A549 (cell line): ENCODE measurements at regions of chr5 and their contacts with region 1.

Region 1: GRCh38 chr5:158695595-158696330 is 404.0 kb downstream of the EBF1 start:
- DNase-seq: peak; percentile 75 to 91
- ATAC-seq: peak; percentile 96 to 97
- H3K4me3 ChIP-seq: no peak overlapping the region
- H3K27ac ChIP-seq: peak overlapping the region; percentile 60 to 71; a peak in 5 of 6 replicates
- H3K4me1 ChIP-seq: peaks cover 47% of the 10 kb centered on the region
- CTCF ChIP-seq: peak; percentile 98
- EP300 ChIP-seq: no peak; a peak in 1 of 5 replicates
- POLR2A ChIP-seq: no peak
- RAD21 ChIP-seq: peak; percentile 97 to 99

Region 2: DNA sequence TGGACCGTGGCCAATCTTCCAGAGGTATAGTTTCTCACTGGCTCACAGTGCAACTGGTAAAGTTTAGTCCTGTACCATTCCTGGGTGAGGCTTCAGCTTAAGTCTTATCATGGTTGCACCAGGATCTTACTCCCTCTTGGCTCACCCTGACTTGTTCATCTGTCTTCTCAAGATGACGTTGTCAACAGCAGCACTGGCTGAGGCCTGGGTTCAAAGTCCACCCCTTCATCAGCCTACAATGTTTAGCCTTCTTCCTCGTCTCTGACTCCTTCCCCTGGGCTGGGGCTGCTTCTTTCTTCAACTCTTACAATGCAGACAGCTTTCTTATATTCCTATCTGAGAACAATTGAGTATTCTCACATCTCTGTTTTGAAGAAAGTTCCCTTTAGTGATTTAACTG is 525.7 kb before region 1 on chr5:
- CTCF ChIA-PET with region 1: interaction called, 41 read pairs
- POLR2A ChIA-PET with region 1: no interaction called
- DNase-seq: peak in 1 of 2 experiments; percentile 18
- ATAC-seq: peak in 1 of 2 experiments; percentile 28; a peak in 2 of 6 replicates
- H3K4me3 ChIP-seq: no peak overlapping the region
- H3K27ac ChIP-seq: no peak overlapping the region
- H3K4me1 ChIP-seq: no peaks in the 10 kb centered on the region
- CTCF ChIP-seq: no peak
- EP300 ChIP-seq: no peak
- POLR2A ChIP-seq: no peak
- RAD21 ChIP-seq: no peak

Region 3: DNA sequence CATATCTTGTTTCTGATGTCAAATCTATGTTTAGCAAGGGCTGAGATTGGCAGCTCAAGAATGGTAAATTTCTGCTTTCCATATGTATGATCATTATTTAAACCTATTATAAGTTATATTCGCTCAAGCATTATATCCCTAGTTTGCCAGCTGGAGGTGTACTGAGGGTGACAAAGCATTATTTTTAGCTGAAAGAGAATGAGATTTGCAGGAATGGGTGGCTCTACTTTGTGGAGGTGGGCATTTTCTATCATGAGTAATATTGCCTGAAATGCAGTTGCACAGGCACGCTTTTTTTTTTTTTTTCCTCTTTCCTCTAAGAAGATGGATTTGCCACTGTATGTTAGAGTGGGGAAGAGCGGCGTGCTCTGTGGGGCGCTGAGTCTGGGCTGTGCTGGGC is 10.1 kb after region 1 on chr5:
- CTCF ChIA-PET with region 1: interaction called, 10 read pairs
- POLR2A ChIA-PET with region 1: no interaction called
- DNase-seq: no peak
- ATAC-seq: no peak
- H3K4me3 ChIP-seq: no peak overlapping the region
- H3K27ac ChIP-seq: no peak overlapping the region
- H3K4me1 ChIP-seq: peaks cover 14% of the 10 kb centered on the region
- CTCF ChIP-seq: no peak
- EP300 ChIP-seq: no peak
- POLR2A ChIP-seq: no peak
- RAD21 ChIP-seq: no peak

Region 4: DNA sequence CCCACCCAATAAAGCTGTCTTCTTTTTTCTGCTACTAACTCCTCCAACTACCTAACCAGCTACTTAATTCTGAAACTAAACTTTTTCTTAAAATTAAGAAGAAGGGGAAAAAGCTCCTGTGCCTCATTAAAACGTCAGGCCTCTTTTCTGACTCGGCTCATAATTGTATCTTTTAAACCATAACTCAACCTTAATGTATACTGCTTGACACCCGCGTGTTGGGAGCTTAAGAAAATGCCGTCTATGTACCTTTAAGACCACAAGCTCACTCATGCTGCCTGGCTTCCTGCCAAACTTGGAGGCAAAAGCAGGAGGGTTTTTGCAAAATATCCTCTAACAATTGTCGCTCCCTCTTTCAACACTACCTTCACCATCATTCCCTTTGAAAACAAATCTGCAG is 399.0 kb after region 1 on chr5:
- CTCF ChIA-PET with region 1: interaction called, 461 read pairs
- POLR2A ChIA-PET with region 1: interaction called, 17 read pairs
- DNase-seq: peak; percentile 73 to 93
- ATAC-seq: peak; percentile 47 to 63; a peak in 5 of 6 replicates
- H3K4me3 ChIP-seq: peak overlapping the region; percentile 7; the same call in 1 of the 3 replicates
- H3K27ac ChIP-seq: peak overlapping the region; percentile 77 to 86
- H3K4me1 ChIP-seq: peaks cover 38% of the 10 kb centered on the region
- CTCF ChIP-seq: no peak
- EP300 ChIP-seq: no peak
- POLR2A ChIP-seq: no peak
- RAD21 ChIP-seq: no peak

Region 5: GRCh38 chr5:159133041-159133741 is 437.4 kb after region 1 on chr5:
- CTCF ChIA-PET with region 1: interaction called, 29 read pairs
- POLR2A ChIA-PET with region 1: no interaction called
- DNase-seq: peak; percentile 25 to 65
- ATAC-seq: peak; percentile 61 to 78
- H3K4me3 ChIP-seq: no peak overlapping the region
- H3K27ac ChIP-seq: peak overlapping the region; percentile 4 to 29; a peak in 1 of 6 replicates
- H3K4me1 ChIP-seq: peaks cover 25% of the 10 kb centered on the region
- CTCF ChIP-seq: peak; percentile 93
- EP300 ChIP-seq: no peak
- POLR2A ChIP-seq: no peak
- RAD21 ChIP-seq: peak; percentile 92 to 93

Region 6: GRCh38 chr5:159412284-159413046 is 716.7 kb after region 1 on chr5:
- CTCF ChIA-PET with region 1: no interaction called
- POLR2A ChIA-PET with region 1: no interaction called
- DNase-seq: no peak
- ATAC-seq: no peak
- H3K4me3 ChIP-seq: no peak overlapping the region
- H3K27ac ChIP-seq: no peak overlapping the region
- H3K4me1 ChIP-seq: no peaks in the 10 kb centered on the region
- CTCF ChIP-seq: no peak
- EP300 ChIP-seq: no peak
- POLR2A ChIP-seq: no peak
- RAD21 ChIP-seq: no peak